ENCODE measurements at regions of chr6 and their contacts with region 1.

Region 1: GRCh38 chr6:30102970-30103874 is 9.7 kb downstream of the TRIM31 start:
- DNase-seq: peak; percentile 95
- H3K4me3 Mint-ChIP-seq: peak overlapping the region; percentile 86
- H3K27ac Mint-ChIP-seq: peak overlapping the region; percentile 38
- H3K4me1 Mint-ChIP-seq: peaks cover 29% of the 10 kb centered on the region
- H3K27me3 Mint-ChIP-seq: peaks cover 57% of the 10 kb centered on the region

Region 2: DNA sequence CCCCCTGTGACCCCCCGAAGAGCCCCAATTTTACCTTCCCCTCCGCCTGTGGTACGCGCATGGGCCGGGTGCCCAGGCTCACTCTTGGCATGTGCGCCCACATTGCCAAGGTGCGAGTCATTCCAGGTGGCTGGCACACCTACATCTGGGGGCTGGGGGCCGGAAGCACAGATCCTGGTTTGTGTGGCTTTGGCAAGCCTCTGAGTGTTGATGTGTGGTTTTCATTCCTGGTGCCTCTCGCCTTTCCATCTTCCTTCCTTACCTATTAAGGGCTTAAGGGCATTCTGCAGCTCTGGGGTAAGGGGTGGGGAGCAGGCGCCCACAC is 27.3 kb before region 1 on chr6:
- intact Hi-C with region 1: loop called (anchors 2 kb)
- DNase-seq: no peak
- H3K4me3 Mint-ChIP-seq: peak overlapping the region; percentile 24
- H3K27ac Mint-ChIP-seq: no peak overlapping the region
- H3K4me1 Mint-ChIP-seq: peaks cover 29% of the 10 kb centered on the region
- H3K27me3 Mint-ChIP-seq: peaks cover 78% of the 10 kb centered on the region

Region 3: GRCh38 chr6:30169658-30170614 is 66.7 kb after region 1 on chr6:
- intact Hi-C with region 1: loop called (anchors 1 kb)
- DNase-seq: peak; percentile 81
- H3K4me3 Mint-ChIP-seq: no peak overlapping the region
- H3K27ac Mint-ChIP-seq: no peak overlapping the region
- H3K4me1 Mint-ChIP-seq: peaks cover 29% of the 10 kb centered on the region
- H3K27me3 Mint-ChIP-seq: peaks cover 30% of the 10 kb centered on the region

Region 4: DNA sequence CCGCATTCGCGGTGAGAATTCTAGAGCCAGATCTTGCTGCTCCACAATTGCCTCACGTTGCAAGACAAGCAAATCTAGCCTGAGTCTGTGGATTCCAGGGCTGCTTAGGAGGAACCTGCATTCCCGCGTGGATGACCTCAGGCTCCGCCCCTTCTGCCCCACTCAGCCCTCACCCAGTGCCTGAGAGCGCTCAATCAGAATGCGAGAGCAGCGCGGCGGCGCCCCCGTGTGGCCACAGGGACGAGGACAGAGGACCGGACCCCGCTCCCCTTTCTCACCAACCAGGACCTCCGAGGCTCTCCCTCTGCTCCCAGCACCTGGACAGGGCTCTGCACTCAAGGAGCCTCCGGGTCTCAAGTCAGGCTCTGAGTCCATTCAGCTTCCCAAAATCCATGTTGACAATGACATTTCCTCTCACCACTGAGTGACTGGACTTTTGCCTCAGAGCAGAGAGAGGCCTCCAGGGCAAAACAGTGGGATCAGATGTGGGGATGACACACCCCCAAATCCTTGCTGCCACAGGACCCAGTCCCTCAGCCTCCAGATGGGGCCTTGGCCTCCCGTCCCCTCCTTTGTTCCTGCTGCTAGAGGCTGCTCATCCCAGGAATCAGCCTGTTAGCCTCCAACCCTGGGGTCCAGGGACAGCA is 293.7 kb after region 1 on chr6:
- intact Hi-C with region 1: loop called (anchors 5 kb)
- DNase-seq: peak; percentile 96
- H3K4me3 Mint-ChIP-seq: no peak overlapping the region
- H3K27ac Mint-ChIP-seq: no peak overlapping the region
- H3K4me1 Mint-ChIP-seq: peaks cover 2% of the 10 kb centered on the region
- H3K27me3 Mint-ChIP-seq: peaks cover 42% of the 10 kb centered on the region

Measured in activated CD4-positive, alpha-beta T cell treated with anti-CD3 and anti-CD28 coated beads, Interleukin-2, amount 10 ng/mL, durations not matched to agents 24 days and 14 days (primary cell).